ENCODE measurements at regions of chr3 and their contacts with region 1.

Region 1: GRCh38 chr3:111338059-111338698 is 203.8 kb upstream of the CD96 start:
- DNase-seq: peak in 4 of 5 donors; percentile 18 to 28 (median 23)
- H3K4me3 ChIP-seq: no peak overlapping the region
- H3K4me3 Mint-ChIP-seq: no peak overlapping the region
- H3K27ac ChIP-seq: no peak overlapping the region
- H3K27ac Mint-ChIP-seq: peak overlapping the region in 1 of 7 donors; percentile 3
- H3K4me1 ChIP-seq: no peaks in the 10 kb centered on the region
- H3K4me1 Mint-ChIP-seq: peaks cover 2 to 10% (median 4%) of the 10 kb centered on the region in 4 donors
- H3K27me3 ChIP-seq: no peaks in the 10 kb centered on the region
- H3K27me3 Mint-ChIP-seq: no peaks in the 10 kb centered on the region

Region 2: DNA sequence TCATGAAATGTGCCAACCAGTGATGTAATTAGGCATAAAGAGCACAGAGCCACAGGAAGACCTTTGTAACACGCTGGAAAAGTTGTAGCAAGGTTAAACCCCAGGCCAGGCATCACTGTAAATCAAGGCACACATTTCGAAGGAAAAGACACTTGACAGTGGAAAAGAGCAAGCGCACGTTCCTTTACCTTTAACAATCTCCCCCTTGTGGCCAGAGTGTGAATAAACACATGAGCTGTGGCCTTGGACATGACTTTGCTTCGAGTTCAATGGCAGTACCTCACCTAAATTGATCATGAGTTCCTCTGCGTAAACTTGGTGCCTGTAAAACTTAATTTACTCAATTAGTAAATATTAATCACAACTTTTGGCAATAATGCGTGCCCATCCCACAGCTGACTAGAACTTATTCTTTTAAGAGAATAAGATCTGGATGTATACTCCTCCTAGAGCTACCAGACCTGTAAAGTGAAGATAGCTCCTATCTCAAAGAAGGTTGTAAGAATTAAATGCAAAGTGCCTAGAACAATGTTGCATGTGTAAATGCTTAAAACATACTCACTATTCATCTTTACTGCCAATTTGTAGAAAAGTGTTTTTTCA is 1023.6 kb before region 1 on chr3:
- CTCF ChIA-PET with region 1: interaction called, 4 read pairs
- POLR2A ChIA-PET with region 1: no interaction called
- intact Hi-C with region 1: loop called (anchors 10 kb)
- DNase-seq: peak; percentile 55 to 67 (median 63)
- H3K4me3 ChIP-seq: no peak overlapping the region
- H3K4me3 Mint-ChIP-seq: peak overlapping the region in 1 of 8 donors; percentile 0
- H3K27ac ChIP-seq: no peak overlapping the region
- H3K27ac Mint-ChIP-seq: no peak overlapping the region
- H3K4me1 ChIP-seq: no peaks in the 10 kb centered on the region
- H3K4me1 Mint-ChIP-seq: peaks cover 0 to 7% (median 4%) of the 10 kb centered on the region in 4 donors
- H3K27me3 ChIP-seq: no peaks in the 10 kb centered on the region
- H3K27me3 Mint-ChIP-seq: peaks cover 0 to under 1% of the 10 kb centered on the region in 2 donors

Region 3: DNA sequence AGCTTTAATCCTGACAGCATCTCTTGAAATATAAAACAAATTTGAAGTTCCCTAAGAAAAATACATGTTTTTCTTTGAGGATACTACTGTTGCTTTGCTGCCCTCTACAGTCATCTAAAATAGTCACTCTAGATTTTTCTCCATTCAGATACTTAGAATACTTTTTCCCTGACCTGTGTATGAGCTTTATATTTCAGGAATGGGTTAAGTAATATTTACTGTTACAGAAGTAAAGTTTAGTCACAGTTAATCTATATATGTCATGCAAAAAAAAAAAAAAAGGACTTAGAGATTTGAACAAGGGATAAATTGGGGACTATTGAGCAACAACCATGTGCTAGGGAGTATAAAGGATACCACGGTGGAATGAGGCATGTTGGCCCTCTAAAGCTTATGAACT is 257.8 kb before region 1 on chr3:
- CTCF ChIA-PET with region 1: interaction called, 14 read pairs
- POLR2A ChIA-PET with region 1: no interaction called
- intact Hi-C with region 1: no loop called
- DNase-seq: no peak
- H3K4me3 ChIP-seq: no peak overlapping the region
- H3K4me3 Mint-ChIP-seq: no peak overlapping the region
- H3K27ac ChIP-seq: no peak overlapping the region
- H3K27ac Mint-ChIP-seq: no peak overlapping the region
- H3K4me1 ChIP-seq: no peaks in the 10 kb centered on the region
- H3K4me1 Mint-ChIP-seq: peaks cover under 1 to 8% (median 3%) of the 10 kb centered on the region in 4 donors
- H3K27me3 ChIP-seq: no peaks in the 10 kb centered on the region
- H3K27me3 Mint-ChIP-seq: no peaks in the 10 kb centered on the region

Region 4: GRCh38 chr3:111311709-111312235 is 26.4 kb before region 1 on chr3:
- CTCF ChIA-PET with region 1: interaction called, 13 read pairs
- POLR2A ChIA-PET with region 1: interaction called, 3 read pairs
- intact Hi-C with region 1: no loop called
- DNase-seq: peak in 2 of 5 donors; percentile 7 to 19
- H3K4me3 ChIP-seq: no peak overlapping the region
- H3K4me3 Mint-ChIP-seq: peak overlapping the region; percentile 9 to 79 (median 61)
- H3K27ac ChIP-seq: peak overlapping the region; percentile 25
- H3K27ac Mint-ChIP-seq: peak overlapping the region; percentile 61 to 98 (median 93)
- H3K4me1 ChIP-seq: peaks cover 55% of the 10 kb centered on the region
- H3K4me1 Mint-ChIP-seq: peaks cover 32 to 40% (median 33%) of the 10 kb centered on the region in 4 donors
- H3K27me3 ChIP-seq: no peaks in the 10 kb centered on the region
- H3K27me3 Mint-ChIP-seq: no peaks in the 10 kb centered on the region

Region 5: GRCh38 chr3:111454538-111454937 is 116.4 kb after region 1 on chr3:
- CTCF ChIA-PET with region 1: no interaction called
- POLR2A ChIA-PET with region 1: no interaction called
- intact Hi-C with region 1: no loop called
- DNase-seq: no peak
- H3K4me3 ChIP-seq: no peak overlapping the region
- H3K4me3 Mint-ChIP-seq: no peak overlapping the region
- H3K27ac ChIP-seq: no peak overlapping the region
- H3K27ac Mint-ChIP-seq: no peak overlapping the region
- H3K4me1 ChIP-seq: no peaks in the 10 kb centered on the region
- H3K4me1 Mint-ChIP-seq: peaks cover 0 to 5% (median 2%) of the 10 kb centered on the region in 4 donors
- H3K27me3 ChIP-seq: no peaks in the 10 kb centered on the region
- H3K27me3 Mint-ChIP-seq: no peaks in the 10 kb centered on the region

Measured in CD4-positive, alpha-beta memory T cell (primary cell).